K562 (cell line): ENCODE measurements at regions of chr2 and their contacts with region 1.

Region 1: DNA sequence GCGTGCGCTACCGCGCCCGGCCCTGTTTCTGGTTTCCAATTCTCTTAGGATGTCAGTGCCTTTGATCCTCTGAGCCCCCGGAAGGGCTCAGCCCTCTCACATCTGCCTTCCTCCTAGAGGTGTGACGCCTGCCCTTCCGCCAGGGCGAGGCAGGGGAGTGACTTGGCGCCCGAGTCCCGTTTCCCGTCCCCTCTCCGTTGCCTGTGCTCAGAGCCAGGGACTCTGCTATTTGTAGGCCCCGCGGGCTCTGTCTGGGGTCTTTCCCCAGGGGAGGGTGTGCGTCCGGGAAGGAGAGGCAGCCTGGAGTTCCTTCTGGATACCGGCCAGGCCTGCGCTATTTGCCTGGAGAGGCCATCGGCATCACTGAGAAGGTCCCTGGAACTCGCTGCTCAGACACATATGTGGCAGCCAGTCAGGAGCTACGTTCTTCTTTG is 103.7 kb upstream of the TAF1B start:
- DNase-seq: no peak
- ATAC-seq: peak; percentile 16; the same call in 1 of the 3 replicates
- H3K4me3 ChIP-seq: no peak overlapping the region
- H3K27ac ChIP-seq: no peak overlapping the region
- H3K4me1 ChIP-seq: peaks cover 10 to 11% of the 10 kb centered on the region in 2 experiments; a peak in 4 of 5 replicates
- H3K27me3 ChIP-seq: peaks cover 10 to 26% of the 10 kb centered on the region in 2 experiments; a peak in 4 of 5 replicates
- CTCF ChIP-seq: no peak
- EP300 ChIP-seq: no peak
- POLR2A ChIP-seq: no peak
- RAD21 ChIP-seq: no peak

Region 2: DNA sequence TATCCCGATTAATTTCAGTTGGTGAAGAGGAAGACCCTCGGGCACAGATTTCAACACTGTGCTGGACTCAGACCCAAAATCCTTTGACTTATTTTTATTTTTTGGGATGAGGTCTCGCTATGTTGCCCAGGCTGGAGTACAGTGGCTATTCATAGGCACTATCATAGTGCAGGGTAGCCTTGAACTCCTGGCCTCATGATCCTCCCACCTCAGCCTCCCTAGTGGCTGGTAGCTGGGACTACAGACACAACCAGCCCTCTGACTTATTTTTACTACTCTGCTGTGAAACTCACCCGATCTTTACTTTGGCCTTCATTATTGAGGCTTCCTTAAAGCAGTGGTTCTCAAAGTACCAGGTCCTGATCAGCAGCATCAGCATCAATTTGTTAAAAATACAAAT is 165.7 kb before region 1 on chr2:
- CTCF ChIA-PET with region 1: no interaction called
- POLR2A ChIA-PET with region 1: no interaction called
- in situ Hi-C with region 1: no loop called
- intact Hi-C with region 1: loop called (anchors 5 kb)
- DNase-seq: no peak
- ATAC-seq: peak; percentile 67
- H3K4me3 ChIP-seq: no peak overlapping the region
- H3K27ac ChIP-seq: no peak overlapping the region
- H3K4me1 ChIP-seq: peaks cover 0 to 13% of the 10 kb centered on the region in 2 experiments; a peak in 2 of 5 replicates
- H3K27me3 ChIP-seq: no peaks in the 10 kb centered on the region
- CTCF ChIP-seq: 0 out of 6 replicates have a peak, but pooled peaks of 1 of the 3 experiments have one; percentile 17
- EP300 ChIP-seq: no peak
- POLR2A ChIP-seq: no peak
- RAD21 ChIP-seq: no peak

Region 3: DNA sequence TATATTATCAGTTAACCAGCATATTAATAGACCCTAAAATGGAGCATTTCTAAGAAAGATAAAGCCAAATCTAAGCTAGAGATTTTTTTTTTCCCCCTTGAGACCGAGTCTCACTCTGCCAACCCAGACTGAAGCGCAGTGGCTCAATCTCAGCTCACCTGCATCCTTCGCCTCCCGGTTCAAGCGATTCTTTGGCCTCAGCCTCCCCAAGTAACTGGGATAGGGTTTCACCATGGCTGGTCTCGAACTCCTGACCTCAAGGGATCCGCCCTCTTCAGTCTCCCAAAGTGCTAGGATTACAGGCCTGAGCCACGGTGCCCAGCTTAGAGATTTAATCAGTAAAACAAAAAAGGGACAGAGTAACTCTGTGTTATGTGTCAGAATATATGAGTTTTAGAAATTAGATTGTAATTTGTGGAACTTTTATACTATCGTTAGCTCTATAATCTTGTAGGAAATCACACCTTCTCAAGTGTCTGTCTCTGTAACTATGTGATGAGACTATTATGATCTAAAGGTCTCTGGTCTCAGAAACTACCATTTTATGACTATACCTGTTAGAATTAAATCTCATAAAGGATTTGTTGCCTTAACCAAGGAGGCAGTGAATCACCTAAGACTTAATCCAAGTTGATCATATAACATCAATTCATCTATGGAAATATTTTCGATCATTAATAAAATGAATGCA is 142.8 kb before region 1 on chr2:
- CTCF ChIA-PET with region 1: no interaction called
- POLR2A ChIA-PET with region 1: no interaction called
- in situ Hi-C with region 1: no loop called
- intact Hi-C with region 1: no loop called
- DNase-seq: peak in 1 of 4 experiments; percentile 50
- ATAC-seq: peak; percentile 56
- H3K4me3 ChIP-seq: no peak overlapping the region
- H3K27ac ChIP-seq: peak overlapping the region; percentile 5; the same call in 2 of the 3 replicates
- H3K4me1 ChIP-seq: peaks cover 5 to 20% of the 10 kb centered on the region in 2 experiments; a peak in 3 of 5 replicates
- H3K27me3 ChIP-seq: no peaks in the 10 kb centered on the region
- CTCF ChIP-seq: no peak
- EP300 ChIP-seq: no peak
- POLR2A ChIP-seq: no peak
- RAD21 ChIP-seq: no peak